HCT116 (cell line): ENCODE measurements at regions of chr19 and their contacts with region 1.

Region 1: GRCh38 chr19:50922317-50922853 is 11.2 kb upstream of the KLK4 start:
- DNase-seq: peak; percentile 84
- ATAC-seq: peak; percentile 100
- H3K4me3 ChIP-seq: peak overlapping the region in 1 of 2 experiments; percentile 12; a peak in 1 of 4 replicates
- H3K27ac ChIP-seq: no peak overlapping the region
- H3K4me1 ChIP-seq: peaks cover 9 to 16% of the 10 kb centered on the region in 2 experiments; a peak in 3 of 4 replicates
- H3K27me3 ChIP-seq: no peaks in the 10 kb centered on the region
- CTCF ChIP-seq: peak; percentile 90 to 94 (median 93)
- POLR2A ChIP-seq: no peak
- RAD21 ChIP-seq: peak; percentile 97

Region 2: DNA sequence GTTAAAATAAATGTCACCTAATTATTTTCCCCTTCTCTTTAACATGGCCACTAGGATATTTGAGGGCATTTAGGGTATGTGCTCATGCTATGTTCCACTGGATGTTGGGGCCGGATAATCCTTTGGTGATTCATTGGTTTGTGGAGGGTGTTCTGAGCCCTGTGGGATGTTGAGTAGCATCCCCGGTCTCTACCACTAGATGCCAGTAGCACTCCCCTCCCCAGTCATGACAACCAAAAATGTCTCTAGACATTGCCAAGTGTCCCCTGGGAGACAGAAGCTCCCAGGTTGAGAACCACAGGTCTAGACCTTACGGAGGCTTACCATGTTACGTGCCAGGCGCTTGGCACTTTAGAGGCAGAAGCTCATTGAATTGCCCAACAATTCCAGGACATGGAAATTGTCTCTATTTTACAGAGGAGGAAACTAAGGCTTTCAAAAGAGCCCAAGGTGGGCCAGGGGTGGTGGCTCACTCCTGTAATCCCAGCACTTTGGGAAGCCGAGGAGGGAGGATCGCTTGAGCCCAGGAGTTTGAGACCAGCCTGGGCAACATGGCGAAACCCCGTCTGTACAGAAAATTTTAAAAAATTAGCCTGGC is 216.9 kb before region 1 on chr19:
- CTCF ChIA-PET with region 1: interaction called, 19 read pairs
- POLR2A ChIA-PET with region 1: interaction called, 3 read pairs
- RAD21 ChIA-PET with region 1: interaction called in 1 of 2 experiments, 9 read pairs
- intact Hi-C with region 1: loop called (anchors 1 kb)
- DNase-seq: peak; percentile 56
- ATAC-seq: peak; percentile 87
- H3K4me3 ChIP-seq: no peak overlapping the region
- H3K27ac ChIP-seq: no peak overlapping the region
- H3K4me1 ChIP-seq: peaks cover 0 to 2% of the 10 kb centered on the region in 2 experiments; a peak in 2 of 4 replicates
- H3K27me3 ChIP-seq: no peaks in the 10 kb centered on the region; the same call in 1 of the 2 replicates
- CTCF ChIP-seq: peak; percentile 79 to 92 (median 85)
- POLR2A ChIP-seq: no peak
- RAD21 ChIP-seq: peak; percentile 87

Region 3: GRCh38 chr19:50794439-50795237 is 127.7 kb before region 1 on chr19:
- CTCF ChIA-PET with region 1: interaction called, 19 read pairs
- POLR2A ChIA-PET with region 1: interaction called, 3 read pairs
- RAD21 ChIA-PET with region 1: interaction called, 3 to 4 read pairs
- intact Hi-C with region 1: loop called (anchors 1 kb)
- DNase-seq: no peak
- ATAC-seq: peak; percentile 61
- H3K4me3 ChIP-seq: no peak overlapping the region
- H3K27ac ChIP-seq: peak overlapping the region; percentile 40
- H3K4me1 ChIP-seq: peaks cover 11 to 32% of the 10 kb centered on the region in 2 experiments; a peak in 3 of 4 replicates
- H3K27me3 ChIP-seq: no peaks in the 10 kb centered on the region
- CTCF ChIP-seq: peak in 2 of 3 experiments; percentile 64 to 78; a peak in 4 of 6 replicates
- POLR2A ChIP-seq: peak; percentile 54
- RAD21 ChIP-seq: peak; percentile 46; the same call in 1 of the 2 replicates

Region 4: DNA sequence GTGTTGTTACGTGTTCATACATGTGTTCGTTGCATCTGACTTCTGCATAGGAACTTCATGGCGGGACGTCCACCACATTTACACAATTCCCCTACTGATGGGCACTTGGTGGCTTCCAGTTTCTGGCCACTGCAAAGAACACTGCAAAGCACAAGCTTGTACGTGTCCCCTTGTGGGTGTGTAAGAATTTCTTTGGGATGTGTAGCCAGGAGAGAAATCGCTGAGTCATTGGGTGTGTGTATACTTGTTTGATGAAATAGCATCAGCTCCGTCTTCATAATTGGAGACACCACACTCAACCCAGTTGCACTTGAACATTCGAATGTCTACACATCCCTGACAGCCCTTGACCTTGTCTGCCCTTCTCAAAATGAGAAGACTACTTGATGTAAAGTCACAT is 11.3 kb after region 1 on chr19:
- CTCF ChIA-PET with region 1: interaction called, 15 read pairs
- POLR2A ChIA-PET with region 1: interaction called, 3 read pairs
- RAD21 ChIA-PET with region 1: interaction called in 1 of 2 experiments, 3 read pairs
- intact Hi-C with region 1: no loop called
- DNase-seq: no peak
- ATAC-seq: no peak
- H3K4me3 ChIP-seq: peak overlapping the region in 1 of 2 experiments; percentile 1; a peak in 1 of 4 replicates
- H3K27ac ChIP-seq: peak overlapping the region; percentile 78
- H3K4me1 ChIP-seq: peaks cover 47 to 54% of the 10 kb centered on the region in 2 experiments
- H3K27me3 ChIP-seq: no peaks in the 10 kb centered on the region
- CTCF ChIP-seq: no peak
- POLR2A ChIP-seq: no peak
- RAD21 ChIP-seq: 0 out of 2 replicates have a peak, but pooled peaks have one; percentile 5

Region 5: GRCh38 chr19:51097166-51097738 is 174.9 kb after region 1 on chr19:
- CTCF ChIA-PET with region 1: interaction called, 8 read pairs
- POLR2A ChIA-PET with region 1: no interaction called
- RAD21 ChIA-PET with region 1: interaction called, 3 to 4 read pairs
- intact Hi-C with region 1: loop called (anchors 2 kb)
- DNase-seq: peak; percentile 31
- ATAC-seq: peak; percentile 87
- H3K4me3 ChIP-seq: no peak overlapping the region
- H3K27ac ChIP-seq: no peak overlapping the region
- H3K4me1 ChIP-seq: peaks cover under 1 to 6% of the 10 kb centered on the region in 2 experiments; a peak in 2 of 4 replicates
- H3K27me3 ChIP-seq: no peaks in the 10 kb centered on the region
- CTCF ChIP-seq: peak; percentile 36 to 78 (median 65); a peak in 5 of 6 replicates
- POLR2A ChIP-seq: no peak
- RAD21 ChIP-seq: peak; percentile 60